Activated B cell treated with CpG ODN at 0.5 μM for 24 hours (primary cell): ENCODE measurements at regions of chr7 and their contacts with region 1.

Region 1: GRCh38 chr7:144738708-144739314 is 97.0 kb downstream of the TPK1 start:
- DNase-seq: no peak
- ATAC-seq: peak; percentile 52
- H3K4me3 Mint-ChIP-seq: no peak overlapping the region
- H3K27ac Mint-ChIP-seq: no peak overlapping the region
- H3K4me1 Mint-ChIP-seq: peaks cover 2% of the 10 kb centered on the region
- H3K27me3 Mint-ChIP-seq: no peaks in the 10 kb centered on the region
- CTCF ChIP-seq: peak; percentile 68

Region 2: GRCh38 chr7:144854839-144855424 is 116.1 kb after region 1 on chr7:
- CTCF ChIA-PET with region 1: interaction called, 5 read pairs
- POLR2A ChIA-PET with region 1: interaction called, 8 read pairs
- intact Hi-C with region 1: loop called (anchors 1 kb)
- DNase-seq: no peak
- ATAC-seq: no peak
- H3K4me3 Mint-ChIP-seq: no peak overlapping the region
- H3K27ac Mint-ChIP-seq: no peak overlapping the region
- H3K4me1 Mint-ChIP-seq: no peaks in the 10 kb centered on the region
- H3K27me3 Mint-ChIP-seq: peaks cover 11% of the 10 kb centered on the region
- CTCF ChIP-seq: no peak

Region 3: DNA sequence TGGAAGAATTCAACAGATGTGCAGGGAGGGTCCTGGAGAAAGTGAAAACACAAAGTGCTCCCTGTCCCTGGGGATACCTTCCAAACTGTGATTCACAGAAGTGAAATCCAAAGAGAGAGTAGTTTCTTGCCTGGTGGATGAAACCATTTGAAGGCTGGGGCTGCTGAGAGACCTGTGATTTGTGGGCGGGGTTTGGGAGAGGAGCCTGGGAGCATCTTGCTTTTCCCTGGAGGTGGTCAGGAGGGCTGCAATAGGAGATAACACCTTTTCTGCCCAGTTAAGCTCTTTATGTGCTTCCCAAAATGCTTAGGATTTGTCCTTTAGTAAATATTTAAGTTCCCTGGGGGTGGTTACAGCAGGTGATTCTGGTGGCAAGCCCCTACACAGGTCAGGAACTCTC is 202.3 kb after region 1 on chr7:
- CTCF ChIA-PET with region 1: no interaction called
- POLR2A ChIA-PET with region 1: no interaction called
- intact Hi-C with region 1: loop called (anchors 5 kb)
- DNase-seq: no peak
- ATAC-seq: no peak
- H3K4me3 Mint-ChIP-seq: no peak overlapping the region
- H3K27ac Mint-ChIP-seq: no peak overlapping the region
- H3K4me1 Mint-ChIP-seq: no peaks in the 10 kb centered on the region
- H3K27me3 Mint-ChIP-seq: no peaks in the 10 kb centered on the region
- CTCF ChIP-seq: no peak

Region 4: GRCh38 chr7:145036604-145037405 is 298.0 kb after region 1 on chr7:
- CTCF ChIA-PET with region 1: interaction called, 9 read pairs
- POLR2A ChIA-PET with region 1: no interaction called
- intact Hi-C with region 1: loop called (anchors 2 kb)
- DNase-seq: no peak
- ATAC-seq: no peak
- H3K4me3 Mint-ChIP-seq: no peak overlapping the region
- H3K27ac Mint-ChIP-seq: no peak overlapping the region
- H3K4me1 Mint-ChIP-seq: peaks cover 1% of the 10 kb centered on the region
- H3K27me3 Mint-ChIP-seq: peaks cover 2% of the 10 kb centered on the region
- CTCF ChIP-seq: peak; percentile 56

Region 5: DNA sequence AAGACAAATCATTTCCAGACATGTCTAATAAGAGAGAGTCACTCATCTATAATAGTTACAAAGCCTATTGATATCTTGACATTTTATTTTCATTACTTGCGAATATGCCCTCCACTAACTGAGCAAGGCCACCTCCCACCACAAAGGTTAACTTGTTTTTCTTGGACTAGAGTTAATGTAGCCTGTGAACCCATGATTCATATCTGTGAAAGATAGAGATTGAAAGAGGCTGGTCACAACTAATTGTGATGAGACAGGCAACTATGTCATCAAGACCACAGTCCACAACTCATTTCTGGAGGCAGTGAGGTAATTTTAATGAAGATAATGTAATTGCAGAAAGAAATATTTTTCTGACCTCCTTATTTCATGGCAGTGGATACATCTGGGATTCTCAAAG is 588.8 kb after region 1 on chr7:
- CTCF ChIA-PET with region 1: no interaction called
- POLR2A ChIA-PET with region 1: no interaction called
- intact Hi-C with region 1: loop called (anchors 5 kb)
- DNase-seq: no peak
- ATAC-seq: no peak
- H3K4me3 Mint-ChIP-seq: no peak overlapping the region
- H3K27ac Mint-ChIP-seq: no peak overlapping the region
- H3K4me1 Mint-ChIP-seq: no peaks in the 10 kb centered on the region
- H3K27me3 Mint-ChIP-seq: no peaks in the 10 kb centered on the region
- CTCF ChIP-seq: no peak